ENCODE measurements at regions of chr17 and their contacts with region 1.

Region 1: DNA sequence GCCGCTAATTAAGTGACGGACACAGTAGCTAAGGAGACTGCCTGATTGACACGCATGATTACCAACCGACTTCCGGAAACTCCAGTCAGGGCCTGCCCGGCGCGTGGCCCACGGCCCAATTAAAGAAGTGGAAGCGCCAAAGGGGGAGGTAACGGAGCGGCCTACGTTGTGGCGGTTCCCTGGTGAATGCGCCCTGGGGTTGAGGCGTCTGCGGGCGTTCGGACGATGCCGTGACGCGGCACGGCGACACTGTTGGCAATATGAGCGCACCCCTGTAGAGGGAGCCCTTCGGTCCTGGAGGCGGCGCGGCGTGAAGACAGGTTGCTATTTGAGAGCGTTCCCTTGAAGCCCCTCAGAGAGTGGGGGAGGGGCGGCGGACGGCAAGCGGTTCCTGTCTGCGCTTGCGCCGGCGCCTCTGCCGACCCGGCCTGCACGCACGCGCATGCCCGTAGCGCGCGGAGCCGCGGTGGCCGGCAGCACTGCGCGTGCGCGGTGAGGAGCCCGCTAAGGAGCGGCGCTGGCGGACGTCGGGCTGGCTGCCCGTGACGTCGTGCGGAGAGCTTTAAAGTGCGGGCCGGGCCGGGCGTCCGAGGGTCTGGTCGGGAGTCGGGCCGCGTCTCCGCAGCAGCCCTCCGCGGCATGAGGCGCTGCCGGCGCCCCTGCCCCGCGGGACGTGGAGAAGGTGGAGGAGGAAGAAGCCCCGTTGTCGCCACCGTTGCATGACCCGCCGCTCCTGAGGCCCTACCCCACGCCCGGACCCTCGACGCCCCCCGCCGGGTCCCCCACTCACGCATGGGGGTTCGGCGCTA is at the start of gene ALKBH5:
- DNase-seq: peak; percentile 99
- H3K4me3 ChIP-seq: peak within 1 kb of the TSS; percentile 91
- H3K27ac ChIP-seq: peak within 1 kb of the TSS; percentile 99
- H3K27me3 ChIP-seq: no peaks in the 10 kb centered on the region
- CTCF ChIP-seq: peak; percentile 39
- polyA plus RNA-seq, gene ALKBH5: 57.6 and 59.9 TPM in 2 replicates

Region 2: GRCh38 chr17:18043491-18043890 is 140.0 kb before region 1 on chr17:
- CTCF ChIA-PET with region 1: no interaction called
- POLR2A ChIA-PET with region 1: no interaction called
- DNase-seq: no peak
- H3K4me3 ChIP-seq: no peak overlapping the region
- H3K27ac ChIP-seq: no peak overlapping the region
- H3K27me3 ChIP-seq: no peaks in the 10 kb centered on the region
- CTCF ChIP-seq: peak; percentile 33; the same call in 1 of the 2 replicates

Region 3: GRCh38 chr17:18246880-18247612 is 63.5 kb after region 1 on chr17:
- CTCF ChIA-PET with region 1: no interaction called
- POLR2A ChIA-PET with region 1: no interaction called
- DNase-seq: no peak
- H3K4me3 ChIP-seq: no peak overlapping the region
- H3K27ac ChIP-seq: no peak overlapping the region
- H3K27me3 ChIP-seq: no peaks in the 10 kb centered on the region
- CTCF ChIP-seq: no peak

Region 4: GRCh38 chr17:18257266-18257981 is 73.9 kb after region 1 on chr17:
- CTCF ChIA-PET with region 1: interaction called, 3 read pairs
- POLR2A ChIA-PET with region 1: interaction called, 10 read pairs
- DNase-seq: no peak
- H3K4me3 ChIP-seq: peak overlapping the region; percentile 83
- H3K27ac ChIP-seq: peak overlapping the region; percentile 73
- H3K27me3 ChIP-seq: no peaks in the 10 kb centered on the region
- CTCF ChIP-seq: no peak

Region 5: DNA sequence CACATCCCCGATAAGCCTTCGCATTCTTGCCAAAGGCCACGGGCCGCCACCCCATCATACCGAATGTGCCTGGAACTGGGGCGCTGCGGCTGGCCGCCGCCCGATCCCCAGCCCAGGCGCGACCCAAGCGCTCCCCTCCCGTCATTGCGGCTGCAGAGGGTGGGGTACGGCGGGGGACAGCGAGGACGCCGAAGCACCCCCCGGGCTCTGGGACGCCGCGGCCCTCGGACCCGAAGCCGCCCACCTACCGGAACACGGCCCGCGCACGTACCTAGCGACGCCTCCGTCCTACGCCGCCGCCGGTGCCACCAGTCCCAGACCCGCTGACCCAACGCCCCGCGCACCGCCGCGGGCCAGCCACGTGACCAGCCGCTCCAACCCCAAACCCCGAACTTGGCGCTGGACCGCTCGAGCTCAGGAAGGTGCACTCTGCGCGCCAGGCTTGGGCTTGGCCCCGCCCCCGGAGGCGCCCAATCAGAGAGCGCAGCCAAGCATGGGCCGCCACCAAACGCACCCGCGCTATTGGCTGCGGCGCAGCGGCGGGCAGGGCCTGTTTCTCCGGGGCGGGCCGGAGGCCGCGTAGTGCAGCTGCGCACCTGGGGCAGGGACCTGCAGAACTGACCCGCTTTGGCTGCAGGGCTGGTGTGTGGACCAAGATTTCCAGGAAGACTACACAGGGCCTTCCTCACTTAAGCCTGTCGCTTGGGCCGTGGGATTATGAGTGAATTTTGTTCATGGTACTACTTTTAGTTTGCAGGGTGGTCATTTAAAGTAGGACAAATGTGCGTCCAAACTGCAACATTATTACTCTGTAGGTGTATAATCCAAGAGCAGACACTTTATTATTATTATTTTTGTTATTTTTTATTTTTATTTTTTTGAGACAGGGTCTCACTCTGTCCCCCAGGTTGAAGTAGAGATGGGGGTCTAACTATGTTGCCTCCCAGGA is 179.8 kb after region 1 on chr17 and contains the start of gene SHMT1:
- CTCF ChIA-PET with region 1: no interaction called
- POLR2A ChIA-PET with region 1: no interaction called
- DNase-seq: peak; percentile 41
- H3K4me3 ChIP-seq: peak within 1 kb of the TSS; percentile 77
- H3K27ac ChIP-seq: no peak within 1 kb of the TSS
- H3K27me3 ChIP-seq: no peaks in the 10 kb centered on the region
- CTCF ChIP-seq: no peak
- polyA plus RNA-seq, gene SHMT1: 4.0 and 4.3 TPM in 2 replicates